PC-9 (cell line): ENCODE measurements at regions of chr16 and their contacts with region 1.

Region 1: GRCh38 chr16:9047686-9048301 is 43.6 kb upstream of the HAPSTR1 start:
- DNase-seq: peak; percentile 85 to 91
- H3K4me3 ChIP-seq: no peak overlapping the region
- H3K27ac ChIP-seq: peak overlapping the region; percentile 83
- H3K4me1 ChIP-seq: peaks cover 17% of the 10 kb centered on the region
- H3K27me3 ChIP-seq: no peaks in the 10 kb centered on the region
- CTCF ChIP-seq: no peak

Region 2: DNA sequence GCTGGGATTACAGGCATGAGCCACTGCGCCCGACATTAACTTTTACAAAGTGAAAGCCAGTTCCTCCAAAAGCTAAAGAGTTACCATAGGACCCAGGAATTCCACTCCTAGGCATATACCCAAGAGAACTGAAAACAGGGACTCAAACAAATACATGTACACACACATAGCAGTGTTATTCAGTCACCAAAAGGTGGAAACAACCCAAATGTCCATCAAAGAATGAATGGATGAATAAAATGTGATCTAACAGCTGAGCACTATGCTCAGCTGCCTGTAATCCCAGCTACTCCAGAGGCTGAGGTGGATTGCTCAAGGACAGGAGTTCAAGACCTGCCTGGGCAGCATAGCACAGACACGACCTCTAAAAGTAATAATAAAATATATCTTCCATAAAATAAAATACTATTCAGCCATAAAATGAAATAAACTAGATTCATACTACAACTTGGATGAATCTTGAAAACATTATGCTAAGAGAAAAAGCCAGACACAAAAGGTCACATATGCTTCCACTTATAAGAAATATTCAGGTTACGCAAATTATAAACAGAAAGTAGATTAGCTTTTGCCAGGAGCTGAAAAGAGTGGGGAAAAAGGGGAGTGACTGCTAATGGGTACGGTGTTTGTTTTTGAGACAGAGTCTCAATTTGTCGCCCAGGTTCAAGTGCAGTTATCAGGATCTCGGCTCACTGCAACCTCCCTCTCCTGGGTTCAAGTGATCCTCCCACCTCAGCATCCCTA is 74.8 kb before region 1 on chr16:
- CTCF ChIA-PET with region 1: no interaction called
- POLR2A ChIA-PET with region 1: no interaction called
- intact Hi-C with region 1: no loop called
- DNase-seq: no peak
- H3K4me3 ChIP-seq: no peak overlapping the region
- H3K27ac ChIP-seq: no peak overlapping the region
- H3K4me1 ChIP-seq: peaks cover under 1% of the 10 kb centered on the region; the same call in 1 of the 2 replicates
- H3K27me3 ChIP-seq: no peaks in the 10 kb centered on the region
- CTCF ChIP-seq: no peak

Region 3: GRCh38 chr16:9061358-9061813 is 13.6 kb after region 1 on chr16:
- CTCF ChIA-PET with region 1: no interaction called
- POLR2A ChIA-PET with region 1: interaction called, 13 read pairs
- intact Hi-C with region 1: no loop called
- DNase-seq: peak in 1 of 2 experiments; percentile 49
- H3K4me3 ChIP-seq: no peak overlapping the region
- H3K27ac ChIP-seq: peak overlapping the region; percentile 36
- H3K4me1 ChIP-seq: peaks cover 14% of the 10 kb centered on the region
- H3K27me3 ChIP-seq: no peaks in the 10 kb centered on the region
- CTCF ChIP-seq: no peak

Region 4: GRCh38 chr16:9068886-9069285 is 21.1 kb after region 1 on chr16:
- CTCF ChIA-PET with region 1: no interaction called
- POLR2A ChIA-PET with region 1: no interaction called
- intact Hi-C with region 1: loop called (anchors 2 kb)
- DNase-seq: no peak
- H3K4me3 ChIP-seq: no peak overlapping the region
- H3K27ac ChIP-seq: peak overlapping the region; percentile 56; the same call in 1 of the 2 replicates
- H3K4me1 ChIP-seq: peaks cover 30% of the 10 kb centered on the region
- H3K27me3 ChIP-seq: no peaks in the 10 kb centered on the region
- CTCF ChIP-seq: no peak